ENCODE measurements at regions of chr6 and their contacts with region 1.

Region 1: GRCh38 chr6:35053701-35054100 is 87.4 kb downstream of the TCP11 start:
- DNase-seq: no peak
- ATAC-seq: no peak
- H3K4me3 ChIP-seq: no peak overlapping the region
- H3K4me3 Mint-ChIP-seq: no peak overlapping the region
- H3K27ac ChIP-seq: no peak overlapping the region
- H3K27ac Mint-ChIP-seq: no peak overlapping the region
- H3K4me1 ChIP-seq: peaks cover under 1% of the 10 kb centered on the region
- H3K4me1 Mint-ChIP-seq: peaks cover 4% of the 10 kb centered on the region
- H3K27me3 ChIP-seq: no peaks in the 10 kb centered on the region
- H3K27me3 Mint-ChIP-seq: no peaks in the 10 kb centered on the region
- CTCF ChIP-seq: no peak

Region 2: GRCh38 chr6:33367009-33367714 is 1686.5 kb before region 1 on chr6:
- CTCF ChIA-PET with region 1: no interaction called
- POLR2A ChIA-PET with region 1: no interaction called
- intact Hi-C with region 1: no loop called
- DNase-seq: no peak
- ATAC-seq: no peak
- H3K4me3 ChIP-seq: no peak overlapping the region
- H3K4me3 Mint-ChIP-seq: no peak overlapping the region
- H3K27ac ChIP-seq: no peak overlapping the region
- H3K27ac Mint-ChIP-seq: no peak overlapping the region
- H3K4me1 ChIP-seq: no peaks in the 10 kb centered on the region
- H3K4me1 Mint-ChIP-seq: no peaks in the 10 kb centered on the region
- H3K27me3 ChIP-seq: no peaks in the 10 kb centered on the region
- H3K27me3 Mint-ChIP-seq: no peaks in the 10 kb centered on the region
- CTCF ChIP-seq: no peak

Region 3: DNA sequence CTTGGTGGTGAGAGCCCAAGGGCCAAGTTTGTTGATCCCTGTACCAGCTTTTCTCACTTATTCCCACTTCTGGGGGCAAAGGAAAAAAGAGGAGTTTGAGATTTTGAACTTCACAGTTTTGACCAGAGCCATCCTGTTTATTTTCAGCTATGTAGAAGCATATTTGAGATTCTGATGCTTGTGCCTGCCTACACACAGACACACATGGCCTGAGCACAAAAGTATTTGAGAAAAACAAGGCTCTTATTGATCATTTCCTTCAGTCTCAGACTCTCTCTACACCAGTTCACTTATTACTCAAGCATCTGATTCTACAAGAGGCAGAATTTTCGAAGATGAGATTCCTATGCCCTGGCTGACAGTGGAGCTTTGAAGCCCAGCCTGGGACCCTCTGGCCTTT is 13.3 kb before region 1 on chr6:
- CTCF ChIA-PET with region 1: no interaction called
- POLR2A ChIA-PET with region 1: no interaction called
- intact Hi-C with region 1: loop called in 1 of 2 experiments (anchors 1 kb)
- DNase-seq: no peak
- ATAC-seq: no peak
- H3K4me3 ChIP-seq: no peak overlapping the region
- H3K4me3 Mint-ChIP-seq: no peak overlapping the region
- H3K27ac ChIP-seq: no peak overlapping the region
- H3K27ac Mint-ChIP-seq: no peak overlapping the region
- H3K4me1 ChIP-seq: peaks cover 2% of the 10 kb centered on the region
- H3K4me1 Mint-ChIP-seq: no peaks in the 10 kb centered on the region
- H3K27me3 ChIP-seq: no peaks in the 10 kb centered on the region
- H3K27me3 Mint-ChIP-seq: no peaks in the 10 kb centered on the region
- CTCF ChIP-seq: no peak